Activated naive CD4-positive, alpha-beta T cell treated with anti-CD3 and anti-CD28 coated beads for 36 hours (primary cell): ENCODE measurements at regions of chr10 and their contacts with region 1.

Region 1: DNA sequence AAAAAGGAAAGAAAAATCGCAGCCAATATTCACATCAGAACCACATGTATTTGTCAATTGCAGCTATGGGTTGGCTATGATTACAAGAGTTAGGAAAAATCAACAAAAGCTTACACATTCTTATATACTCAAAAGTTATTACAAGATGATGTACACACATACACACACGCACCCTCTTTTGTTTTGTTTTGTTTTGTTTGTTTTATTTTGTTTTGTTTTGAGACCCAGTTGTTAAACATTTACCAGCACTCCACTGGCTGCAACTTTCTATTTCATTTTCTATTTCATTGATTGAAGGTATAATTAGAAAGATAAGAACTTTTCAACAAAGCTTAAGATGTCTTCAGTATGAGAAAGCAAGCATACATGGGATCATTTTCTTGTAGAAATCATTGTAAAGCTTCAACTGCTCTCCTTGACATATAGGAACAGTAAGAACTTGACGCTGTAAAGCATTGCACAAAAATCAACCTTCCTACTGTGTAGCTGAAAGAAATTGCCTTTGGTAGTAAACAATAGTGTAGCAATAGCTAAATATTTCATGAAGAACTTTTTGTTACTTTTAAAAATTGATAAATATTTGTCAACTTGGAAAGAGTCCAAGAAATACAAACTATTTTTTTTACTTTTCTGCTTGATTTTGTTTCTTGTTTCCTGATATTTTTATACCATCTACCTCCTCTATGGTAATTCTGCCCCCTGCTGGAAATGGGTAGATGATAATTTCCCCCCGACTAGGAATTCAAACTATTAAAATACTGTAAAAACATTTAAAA is 205.9 kb downstream of the MBL2 start:
- DNase-seq: no peak
- H3K4me3 Mint-ChIP-seq: no peak overlapping the region
- H3K27ac Mint-ChIP-seq: no peak overlapping the region
- H3K4me1 Mint-ChIP-seq: no peaks in the 10 kb centered on the region
- H3K27me3 Mint-ChIP-seq: no peaks in the 10 kb centered on the region

Region 2: GRCh38 chr10:52313933-52314816 is 252.5 kb before region 1 on chr10 and contains the start of gene DKK1:
- CTCF ChIA-PET with region 1: no interaction called
- intact Hi-C with region 1: loop called (anchors 5 kb)
- DNase-seq: peak; percentile 23
- H3K4me3 Mint-ChIP-seq: peak within 1 kb of the TSS; percentile 39
- H3K27ac Mint-ChIP-seq: no peak within 1 kb of the TSS
- H3K4me1 Mint-ChIP-seq: peaks cover 12% of the 10 kb centered on the region
- H3K27me3 Mint-ChIP-seq: peaks cover 42% of the 10 kb centered on the region
- total RNA-seq, gene DKK1: not detected

Region 3: DNA sequence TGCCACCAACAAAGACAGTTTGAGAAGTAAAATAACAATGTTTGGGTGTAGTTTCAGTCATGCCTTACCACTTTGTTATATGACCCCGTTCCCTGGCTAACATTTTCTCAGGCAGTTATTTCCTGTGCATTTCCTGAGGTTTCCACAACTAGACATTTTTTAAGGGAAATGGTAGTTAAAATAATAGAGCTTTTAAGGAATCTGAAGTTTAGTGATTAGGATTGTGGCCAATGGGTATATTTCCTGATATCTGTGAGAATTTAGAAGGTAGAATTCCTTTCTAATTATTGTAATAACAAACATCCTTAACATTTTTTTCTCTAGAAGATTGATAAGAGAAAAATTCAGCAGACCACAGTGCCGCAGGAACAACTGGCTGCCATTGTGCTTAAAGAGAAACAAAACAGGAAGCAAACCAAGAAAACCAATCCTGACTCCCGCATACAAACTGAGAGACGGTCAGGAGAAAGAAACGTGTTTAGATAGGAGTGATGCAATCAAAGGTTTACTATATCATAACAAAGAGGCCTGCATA is 12.3 kb after region 1 on chr10:
- CTCF ChIA-PET with region 1: no interaction called
- intact Hi-C with region 1: no loop called
- DNase-seq: no peak
- H3K4me3 Mint-ChIP-seq: no peak overlapping the region
- H3K27ac Mint-ChIP-seq: no peak overlapping the region
- H3K4me1 Mint-ChIP-seq: no peaks in the 10 kb centered on the region
- H3K27me3 Mint-ChIP-seq: no peaks in the 10 kb centered on the region